AG04449 (cell line): ENCODE measurements at regions of chr20 and their contacts with region 1.

Region 1: DNA sequence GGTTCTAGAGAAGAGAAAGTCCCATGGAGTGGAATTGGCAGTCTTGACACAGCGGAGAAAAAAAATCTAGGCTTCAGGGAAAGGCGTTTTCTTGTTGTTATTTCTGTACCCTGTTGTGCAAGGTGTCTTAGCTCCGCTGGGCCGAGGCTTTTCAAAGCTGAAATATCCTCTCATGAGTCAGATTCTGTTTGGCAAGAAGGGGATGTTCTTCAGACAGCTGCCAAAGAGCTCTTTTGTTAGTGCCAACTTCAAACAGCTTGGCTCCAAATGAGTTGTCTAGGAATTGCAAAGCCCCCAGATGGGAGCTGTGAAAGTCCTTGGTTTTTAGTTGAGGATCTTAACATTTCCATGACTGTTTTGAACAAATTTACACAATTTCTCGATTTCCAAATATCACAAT is 45.6 kb downstream of the LRRN4 start:
- DNase-seq: peak; percentile 71
- H3K4me3 ChIP-seq: peak overlapping the region; percentile 29
- CTCF ChIP-seq: no peak

Region 2: GRCh38 chr20:5991623-5992441 is 16.4 kb before region 1 on chr20:
- CTCF ChIA-PET with region 1: interaction called, 10 read pairs
- POLR2A ChIA-PET with region 1: no interaction called
- DNase-seq: no peak
- H3K4me3 ChIP-seq: no peak overlapping the region
- CTCF ChIP-seq: no peak

Region 3: GRCh38 chr20:6074145-6074561 is 65.9 kb after region 1 on chr20:
- CTCF ChIA-PET with region 1: interaction called, 16 read pairs
- POLR2A ChIA-PET with region 1: no interaction called
- DNase-seq: no peak
- H3K4me3 ChIP-seq: no peak overlapping the region
- CTCF ChIP-seq: peak; percentile 42

Region 4: GRCh38 chr20:6169251-6169650 is 161.0 kb after region 1 on chr20:
- CTCF ChIA-PET with region 1: no interaction called
- POLR2A ChIA-PET with region 1: no interaction called
- DNase-seq: no peak
- H3K4me3 ChIP-seq: no peak overlapping the region
- CTCF ChIP-seq: no peak